ENCODE measurements at regions of chr1 and their contacts with region 1.

Region 1: DNA sequence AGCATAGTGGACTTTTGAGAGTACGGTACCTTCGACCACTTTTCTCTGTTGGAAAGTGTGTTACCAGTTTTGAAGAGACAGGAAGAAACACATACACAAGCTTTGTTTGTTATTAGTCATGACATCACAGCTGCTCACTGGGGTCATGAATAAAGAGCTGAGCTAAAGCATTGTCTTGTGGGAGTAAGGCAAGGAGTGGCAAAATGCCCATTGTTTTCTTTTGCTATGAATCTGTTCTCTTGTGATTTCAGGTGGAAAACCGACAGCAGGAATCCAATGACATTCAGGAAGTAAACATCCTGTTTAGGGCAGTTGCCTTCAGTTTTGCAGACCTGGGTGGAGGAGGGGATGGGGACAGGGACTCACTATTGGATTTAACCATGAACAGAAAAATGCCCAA is 66.2 kb downstream of the RGL1 start:
- DNase-seq: peak in 1 of 2 donors; percentile 38
- ATAC-seq: peak in 6 of 8 donors; percentile 40 to 69 (median 54)
- H3K4me3 ChIP-seq: no peak overlapping the region
- H3K27ac ChIP-seq: peak overlapping the region; percentile 24 to 88 (median 72)
- H3K4me1 ChIP-seq: peaks cover 11 to 83% (median 68%) of the 10 kb centered on the region in 9 donors
- H3K27me3 ChIP-seq: no peaks in the 10 kb centered on the region
- CTCF ChIP-seq: no peak

Region 2: GRCh38 chr1:183537405-183537804 is 333.7 kb before region 1 on chr1:
- intact Hi-C with region 1: no loop called
- DNase-seq: no peak
- ATAC-seq: no peak
- H3K4me3 ChIP-seq: no peak overlapping the region
- H3K27ac ChIP-seq: no peak overlapping the region
- H3K4me1 ChIP-seq: no peaks in the 10 kb centered on the region
- H3K27me3 ChIP-seq: no peaks in the 10 kb centered on the region
- CTCF ChIP-seq: no peak

Region 3: GRCh38 chr1:183734543-183735036 is 136.6 kb before region 1 on chr1:
- intact Hi-C with region 1: no loop called
- DNase-seq: peak in 1 of 2 donors; percentile 66
- ATAC-seq: peak; percentile 62 to 93 (median 82)
- H3K4me3 ChIP-seq: no peak overlapping the region
- H3K27ac ChIP-seq: peak overlapping the region in 8 of 10 donors; percentile 4 to 65 (median 48)
- H3K4me1 ChIP-seq: peaks cover 8 to 83% (median 45%) of the 10 kb centered on the region in 9 donors
- H3K27me3 ChIP-seq: no peaks in the 10 kb centered on the region
- CTCF ChIP-seq: no peak

Region 4: GRCh38 chr1:183804881-183805841 is 66.0 kb before region 1 on chr1 and contains the start of gene RGL1:
- intact Hi-C with region 1: loop called in 1 of 10 experiments (anchors 5 kb)
- DNase-seq: peak; percentile 70 to 76
- ATAC-seq: peak; percentile 86 to 96 (median 91)
- H3K4me3 ChIP-seq: peak within 1 kb of the TSS; percentile 55 to 73 (median 66)
- H3K27ac ChIP-seq: peak within 1 kb of the TSS; percentile 70 to 89 (median 80)
- H3K4me1 ChIP-seq: peaks cover 0 to 50% (median 30%) of the 10 kb centered on the region in 9 donors
- H3K27me3 ChIP-seq: no peaks in the 10 kb centered on the region
- CTCF ChIP-seq: no peak
- total RNA-seq, gene RGL1: 12.6 to 33.4 (median 18.9) TPM

Region 5: GRCh38 chr1:183932412-183932811 is 61.3 kb after region 1 on chr1:
- intact Hi-C with region 1: no loop called
- DNase-seq: peak; percentile 85
- ATAC-seq: peak; percentile 81 to 91 (median 86)
- H3K4me3 ChIP-seq: peak overlapping the region in 2 of 10 donors; percentile 10 to 11
- H3K27ac ChIP-seq: peak overlapping the region; percentile 12 to 78 (median 50)
- H3K4me1 ChIP-seq: peaks cover 9 to 35% (median 22%) of the 10 kb centered on the region in 9 donors
- H3K27me3 ChIP-seq: no peaks in the 10 kb centered on the region
- CTCF ChIP-seq: no peak

Measured in heart right ventricle (tissue), 16 donors.